ENCODE measurements at regions of chr12 and their contacts with region 1.

Region 1: GRCh38 chr12:20125276-20125798 is 243.0 kb upstream of the PDE3A start:
- DNase-seq: no peak
- H3K4me3 Mint-ChIP-seq: no peak overlapping the region
- H3K27ac Mint-ChIP-seq: no peak overlapping the region
- H3K4me1 Mint-ChIP-seq: no peaks in the 10 kb centered on the region
- H3K27me3 Mint-ChIP-seq: peaks cover 75% of the 10 kb centered on the region
- CTCF ChIP-seq: no peak

Region 2: GRCh38 chr12:20549107-20549719 is 423.9 kb after region 1 on chr12:
- CTCF ChIA-PET with region 1: no interaction called
- POLR2A ChIA-PET with region 1: no interaction called
- intact Hi-C with region 1: loop called (anchors 10 kb)
- DNase-seq: peak; percentile 53
- H3K4me3 Mint-ChIP-seq: no peak overlapping the region
- H3K27ac Mint-ChIP-seq: no peak overlapping the region
- H3K4me1 Mint-ChIP-seq: no peaks in the 10 kb centered on the region
- H3K27me3 Mint-ChIP-seq: peaks cover 47% of the 10 kb centered on the region
- CTCF ChIP-seq: peak; percentile 45